Calu3 (cell line): ENCODE measurements at regions of chr3 and their contacts with region 1.

Region 1: DNA sequence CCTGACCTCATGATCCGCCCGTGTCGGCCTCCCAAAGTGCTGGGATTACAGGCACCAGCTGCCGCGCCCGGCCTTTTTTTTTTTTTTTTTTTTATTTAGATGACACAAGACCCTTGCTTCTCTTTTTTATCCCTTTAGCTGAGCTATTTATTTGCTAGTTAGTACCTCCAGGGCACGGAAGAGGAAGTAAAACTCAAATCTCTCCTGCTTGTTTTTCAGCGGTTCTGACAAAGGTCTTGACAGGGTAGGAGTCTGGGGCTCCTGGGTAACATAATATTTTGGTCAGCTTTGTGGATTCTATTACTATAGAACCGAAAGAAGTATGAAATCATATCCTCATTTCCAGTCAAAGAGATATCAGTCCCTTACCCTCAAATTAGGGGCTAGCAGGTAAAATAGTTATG is 44.0 kb upstream of the ETV5 start:
- DNase-seq: peak; percentile 45
- H3K4me3 Mint-ChIP-seq: no peak overlapping the region
- H3K27ac Mint-ChIP-seq: peak overlapping the region; percentile 48
- H3K4me1 Mint-ChIP-seq: peaks cover 19% of the 10 kb centered on the region
- H3K27me3 Mint-ChIP-seq: no peaks in the 10 kb centered on the region
- CTCF ChIP-seq: no peak

Region 2: DNA sequence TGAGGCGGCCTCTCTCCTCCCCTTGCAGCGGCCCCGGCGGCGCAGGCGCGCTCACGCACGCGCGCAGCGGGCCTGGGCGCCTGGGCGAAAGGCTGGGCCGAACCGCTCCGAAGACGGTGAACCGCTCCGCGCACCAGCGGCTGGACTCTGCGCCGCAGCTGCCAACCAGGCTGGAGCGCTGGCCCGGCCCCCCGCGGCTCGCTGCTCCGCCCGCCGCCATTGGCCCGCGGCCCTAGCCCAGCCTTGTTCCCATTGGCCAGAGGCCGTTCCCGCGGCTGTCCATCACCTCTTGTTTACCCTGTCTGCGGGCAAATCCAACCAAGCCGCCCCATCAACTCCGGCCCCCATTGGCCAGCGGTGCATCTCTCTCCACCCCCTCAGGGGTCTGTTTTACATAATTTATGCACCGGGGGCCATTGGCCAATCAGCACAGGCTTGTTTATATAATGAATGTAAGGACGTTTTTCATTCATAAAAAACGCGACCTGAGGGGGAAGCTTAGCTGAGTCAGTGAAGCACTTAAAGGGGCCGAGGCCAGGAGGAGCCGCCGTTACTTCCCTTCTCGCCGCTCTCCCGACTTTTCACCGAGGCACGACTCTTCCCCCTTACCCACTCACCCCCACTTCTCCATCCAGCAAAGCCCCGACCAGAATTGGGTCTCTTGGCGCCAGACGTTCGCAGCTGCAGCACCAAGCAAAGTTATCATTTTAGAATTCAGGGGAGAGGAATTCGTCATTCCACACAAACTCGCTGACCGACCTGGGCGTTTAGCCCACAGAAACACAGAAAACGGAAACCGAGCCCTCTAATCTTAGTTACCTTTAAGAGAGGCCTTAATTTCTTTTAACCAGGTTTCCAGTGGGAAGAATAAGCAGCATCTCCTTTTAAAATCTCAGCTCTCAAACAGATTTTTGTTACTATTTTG is 43.7 kb before region 1 on chr3 and contains the start of gene ETV5:
- CTCF ChIA-PET with region 1: interaction called, 3 read pairs
- intact Hi-C with region 1: loop called (anchors 5 kb)
- DNase-seq: peak; percentile 100
- H3K4me3 Mint-ChIP-seq: peak within 1 kb of the TSS; percentile 79
- H3K27ac Mint-ChIP-seq: peak within 1 kb of the TSS; percentile 85
- H3K4me1 Mint-ChIP-seq: peaks cover 25% of the 10 kb centered on the region
- H3K27me3 Mint-ChIP-seq: peaks cover 16% of the 10 kb centered on the region
- CTCF ChIP-seq: no peak
- total RNA-seq, gene ETV5: 95.9 and 108 TPM in 2 replicates